WTC11 (cell line): ENCODE measurements at regions of chr18 and their contacts with region 1.

Region 1: GRCh38 chr18:23498877-23499276 is 4.4 kb upstream of the RMC1 start:
- DNase-seq: peak; percentile 63
- ATAC-seq: peak; percentile 47
- H3K4me3 Mint-ChIP-seq: no peak overlapping the region
- H3K27ac Mint-ChIP-seq: no peak overlapping the region
- H3K4me1 Mint-ChIP-seq: peaks cover 10% of the 10 kb centered on the region
- H3K27me3 Mint-ChIP-seq: peaks cover 5% of the 10 kb centered on the region
- CTCF ChIP-seq: peak; percentile 75

Region 2: GRCh38 chr18:23487738-23488570 is 10.9 kb before region 1 on chr18:
- CTCF ChIA-PET with region 1: interaction called, 34 read pairs
- POLR2A ChIA-PET with region 1: no interaction called
- DNase-seq: no peak
- ATAC-seq: peak; percentile 43
- H3K4me3 Mint-ChIP-seq: no peak overlapping the region
- H3K27ac Mint-ChIP-seq: no peak overlapping the region
- H3K4me1 Mint-ChIP-seq: peaks cover 17% of the 10 kb centered on the region
- H3K27me3 Mint-ChIP-seq: no peaks in the 10 kb centered on the region
- CTCF ChIP-seq: no peak

Region 3: DNA sequence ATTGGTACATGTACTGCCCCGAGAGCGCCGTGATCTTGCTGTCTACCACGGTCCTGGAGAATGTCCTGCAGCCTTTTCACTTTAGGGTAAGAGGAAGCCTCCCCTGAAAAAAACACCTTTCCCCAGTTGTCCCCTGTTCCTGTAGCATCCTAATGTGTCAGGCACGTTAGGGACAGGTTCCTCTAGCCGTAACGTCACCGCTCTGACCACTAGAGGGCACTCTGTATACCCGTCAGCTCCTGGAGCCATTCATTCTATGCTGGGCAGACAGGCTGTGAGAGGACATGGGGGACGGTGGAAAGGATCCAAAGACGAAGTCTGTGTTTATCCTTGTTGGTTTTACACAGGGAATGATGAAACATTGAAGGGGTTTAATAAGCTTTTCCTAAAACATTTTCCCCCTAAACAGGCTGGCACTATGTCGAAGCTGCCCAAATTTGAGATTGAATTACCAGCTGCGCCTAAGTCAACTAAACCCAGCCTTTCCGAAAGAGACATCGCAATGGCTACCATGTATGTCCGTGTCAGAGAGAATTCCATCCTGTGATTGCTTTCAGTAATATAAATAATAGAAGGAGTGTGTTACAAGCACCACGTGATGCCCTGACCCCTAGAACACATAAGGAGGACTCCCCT is 17.2 kb after region 1 on chr18:
- CTCF ChIA-PET with region 1: interaction called, 17 read pairs
- POLR2A ChIA-PET with region 1: no interaction called
- DNase-seq: peak; percentile 85
- ATAC-seq: peak; percentile 99
- H3K4me3 Mint-ChIP-seq: no peak overlapping the region
- H3K27ac Mint-ChIP-seq: no peak overlapping the region
- H3K4me1 Mint-ChIP-seq: no peaks in the 10 kb centered on the region
- H3K27me3 Mint-ChIP-seq: no peaks in the 10 kb centered on the region
- CTCF ChIP-seq: peak; percentile 71

Region 4: GRCh38 chr18:23918401-23919032 is 419.6 kb after region 1 on chr18:
- CTCF ChIA-PET with region 1: no interaction called
- POLR2A ChIA-PET with region 1: no interaction called
- DNase-seq: peak; percentile 88
- ATAC-seq: peak; percentile 83
- H3K4me3 Mint-ChIP-seq: no peak overlapping the region
- H3K27ac Mint-ChIP-seq: no peak overlapping the region; the same call in 1 of the 2 replicates
- H3K4me1 Mint-ChIP-seq: peaks cover 6% of the 10 kb centered on the region
- H3K27me3 Mint-ChIP-seq: no peaks in the 10 kb centered on the region
- CTCF ChIP-seq: peak; percentile 80